ENCODE measurements at regions of chr9 and their contacts with region 1.

Region 1: DNA sequence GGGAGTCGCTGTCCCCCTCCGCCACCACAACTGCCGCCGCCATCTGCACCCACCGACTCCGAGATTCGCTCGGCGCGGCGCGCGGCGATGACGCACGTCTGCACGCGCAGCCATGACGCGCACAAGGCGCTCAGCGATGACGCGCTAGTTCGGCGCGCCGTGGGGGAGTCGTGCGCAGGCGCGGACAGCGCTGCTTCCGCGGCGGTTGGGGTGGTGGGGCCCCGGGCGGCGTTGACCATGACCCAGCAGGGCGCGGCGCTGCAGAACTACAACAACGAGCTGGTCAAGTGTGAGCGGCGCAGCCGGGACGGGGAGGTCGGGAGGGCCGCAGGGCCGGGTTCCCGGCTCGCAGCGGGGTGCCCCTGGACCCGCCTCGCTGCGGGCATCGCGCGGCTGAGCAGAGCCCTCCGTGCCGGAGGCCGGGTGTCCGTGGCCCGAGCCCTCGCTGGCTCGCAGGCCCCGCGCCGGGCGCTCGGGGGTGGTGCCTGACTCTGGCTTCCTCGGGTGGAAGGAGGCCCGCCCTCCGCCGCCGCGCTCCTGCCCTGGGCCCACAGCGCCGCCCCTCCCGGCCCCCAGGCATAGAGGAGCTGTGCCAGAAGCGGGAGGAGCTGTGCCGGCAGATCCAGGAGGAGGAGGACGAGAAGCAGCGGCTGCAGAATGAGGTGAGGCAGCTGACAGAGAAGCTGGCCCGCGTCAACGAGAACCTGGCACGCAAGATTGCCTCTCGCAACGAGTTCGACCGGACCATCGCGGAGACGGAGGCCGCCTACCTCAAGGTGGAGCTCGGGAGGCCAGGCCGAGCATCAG is at the starts of genes ANAPC2 and SSNA1:
- DNase-seq: peak; percentile 85 to 98 (median 90)

Region 2: GRCh38 chr9:137149942-137150616 is 38.6 kb before region 1 on chr9:
- intact Hi-C with region 1: no loop called
- DNase-seq: no peak

Region 3: GRCh38 chr9:137205126-137206069 is 16.7 kb after region 1 on chr9 and contains the starts of genes NDOR1 and TMEM203:
- intact Hi-C with region 1: loop called (anchors 1 kb)
- DNase-seq: peak; percentile 94 to 99 (median 98)

Region 4: DNA sequence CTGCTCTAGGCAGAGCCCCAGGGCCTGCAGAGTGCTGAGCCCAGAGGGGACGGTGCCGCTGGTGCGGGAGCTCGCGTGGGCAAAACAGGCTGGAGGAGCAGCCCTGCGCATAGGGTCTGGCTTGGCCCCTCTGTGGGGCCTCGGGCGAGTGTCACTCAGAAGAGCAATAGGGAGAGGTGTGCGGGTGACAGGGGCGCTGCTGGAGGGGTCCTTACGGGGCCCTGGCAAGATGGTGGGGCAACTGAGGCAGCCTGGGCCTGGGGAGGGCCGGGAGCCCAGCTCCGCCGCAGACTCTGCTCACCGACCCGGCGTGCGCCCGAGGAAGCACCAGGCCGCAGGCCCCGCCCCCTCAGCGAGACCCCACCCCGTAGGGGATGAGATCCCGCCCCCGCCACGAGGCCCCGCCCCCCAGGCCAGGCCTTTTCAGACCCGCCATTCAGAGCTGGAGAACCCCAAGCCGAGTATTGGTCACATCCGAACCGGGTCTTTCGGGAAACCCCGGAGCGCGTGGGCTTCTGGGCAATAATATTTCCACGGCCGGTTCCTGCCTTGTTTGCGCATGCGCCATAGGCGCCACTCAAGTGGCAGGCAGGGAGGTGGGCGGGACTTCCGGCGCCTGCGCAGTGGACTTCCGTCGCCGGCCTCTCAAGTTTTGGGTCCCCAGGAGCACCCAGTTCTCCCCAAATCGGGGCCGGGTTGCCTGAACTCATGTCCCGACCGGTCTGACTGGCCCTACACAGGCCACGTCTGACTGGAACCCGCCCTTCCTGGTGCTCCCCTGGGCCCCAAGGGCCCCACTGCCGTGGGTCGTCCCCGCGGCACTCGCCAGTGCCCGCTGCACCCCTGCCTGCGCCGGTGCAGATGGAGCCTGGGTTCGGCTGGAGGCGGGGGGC is 34.6 kb after region 1 on chr9:
- intact Hi-C with region 1: loop called (anchors 2 kb)
- DNase-seq: peak; percentile 92 to 99 (median 96)

Region 5: DNA sequence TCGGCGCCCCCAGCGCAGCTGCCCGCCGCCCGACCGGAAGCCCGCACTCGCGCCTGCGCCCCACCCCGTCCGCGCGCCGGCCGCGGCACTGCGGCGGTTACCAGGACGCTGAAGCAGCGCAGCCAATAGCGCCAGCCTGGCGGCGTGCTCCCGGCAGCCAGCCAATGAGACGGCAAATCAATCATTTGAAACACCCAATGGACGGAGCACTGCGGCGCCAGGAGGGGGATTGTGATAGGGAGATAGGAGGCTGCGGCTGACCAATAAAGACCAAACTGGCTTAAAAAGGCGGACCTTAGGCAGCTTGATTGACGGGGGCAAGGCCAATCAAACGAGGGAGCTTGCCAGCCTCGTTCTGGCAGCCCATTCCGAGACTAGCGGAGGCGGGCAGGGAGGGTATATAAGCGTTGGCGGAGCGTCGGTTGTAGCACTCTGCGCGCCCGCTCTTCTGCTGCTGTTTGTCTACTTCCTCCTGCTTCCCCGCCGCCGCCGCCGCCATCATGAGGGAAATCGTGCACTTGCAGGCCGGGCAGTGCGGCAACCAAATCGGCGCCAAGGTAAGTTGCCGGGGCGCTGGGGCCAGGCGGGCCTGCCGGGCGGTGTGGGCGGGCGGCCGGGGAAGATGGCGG is 52.3 kb after region 1 on chr9 and contains the start of gene TUBB4B:
- intact Hi-C with region 1: loop called (anchors 5 kb)
- DNase-seq: peak; percentile 98 to 100 (median 99)

Measured in posterior cingulate gyrus (tissue), 11 donors.